ENCODE measurements at regions of chr1 and their contacts with region 1.

Region 1: GRCh38 chr1:186363891-186364290 is 11.2 kb downstream of the TPR start:
- H3K4me3 Mint-ChIP-seq: no peak overlapping the region
- H3K27ac Mint-ChIP-seq: no peak overlapping the region
- H3K4me1 Mint-ChIP-seq: no peaks in the 10 kb centered on the region
- H3K27me3 Mint-ChIP-seq: no peaks in the 10 kb centered on the region

Region 2: GRCh38 chr1:186231962-186232361 is 131.9 kb before region 1 on chr1:
- intact Hi-C with region 1: no loop called
- H3K4me3 Mint-ChIP-seq: no peak overlapping the region
- H3K27ac Mint-ChIP-seq: no peak overlapping the region
- H3K4me1 Mint-ChIP-seq: no peaks in the 10 kb centered on the region
- H3K27me3 Mint-ChIP-seq: no peaks in the 10 kb centered on the region

Region 3: DNA sequence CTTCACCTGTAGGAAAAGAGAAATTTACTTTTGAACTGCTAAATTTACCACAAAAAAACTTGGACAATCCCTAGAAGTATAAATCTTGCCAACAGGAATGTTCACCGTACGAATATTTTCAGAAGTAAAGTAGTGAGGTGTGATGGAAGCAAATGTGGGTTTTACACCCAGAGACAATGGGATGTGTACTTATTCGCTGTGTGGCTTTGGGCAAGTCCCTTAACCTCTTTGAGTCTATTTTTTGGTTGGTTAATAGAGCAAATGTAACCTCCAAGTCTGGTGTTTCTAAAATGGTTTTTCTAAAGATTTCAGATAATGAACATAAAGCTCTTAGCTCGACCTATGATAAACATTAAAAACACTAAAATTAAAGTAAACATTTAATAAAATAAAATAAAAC is 40.0 kb before region 1 on chr1:
- intact Hi-C with region 1: loop called (anchors 5 kb)
- H3K4me3 Mint-ChIP-seq: no peak overlapping the region
- H3K27ac Mint-ChIP-seq: no peak overlapping the region
- H3K4me1 Mint-ChIP-seq: no peaks in the 10 kb centered on the region
- H3K27me3 Mint-ChIP-seq: no peaks in the 10 kb centered on the region

Region 4: DNA sequence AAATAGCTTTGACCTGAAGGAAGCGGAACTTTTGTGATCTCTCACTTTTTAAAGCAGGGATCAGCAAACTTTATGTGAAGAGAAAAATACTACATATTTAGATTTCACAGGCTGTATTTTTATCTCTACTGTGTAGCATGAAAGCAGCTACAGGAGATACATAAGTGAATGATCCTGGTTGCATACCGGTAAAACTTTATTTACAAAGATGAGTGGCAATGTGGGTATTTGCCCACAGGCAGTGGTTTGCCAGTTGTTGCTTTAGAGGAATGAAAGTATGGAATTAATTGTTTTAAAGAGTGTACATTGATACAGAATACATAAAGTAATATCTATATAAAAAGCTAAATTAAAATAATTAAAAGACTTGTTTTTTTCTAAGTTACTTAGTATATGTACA is 29.6 kb after region 1 on chr1:
- intact Hi-C with region 1: loop called (anchors 5 kb)
- H3K4me3 Mint-ChIP-seq: no peak overlapping the region
- H3K27ac Mint-ChIP-seq: no peak overlapping the region
- H3K4me1 Mint-ChIP-seq: no peaks in the 10 kb centered on the region
- H3K27me3 Mint-ChIP-seq: no peaks in the 10 kb centered on the region

Region 5: DNA sequence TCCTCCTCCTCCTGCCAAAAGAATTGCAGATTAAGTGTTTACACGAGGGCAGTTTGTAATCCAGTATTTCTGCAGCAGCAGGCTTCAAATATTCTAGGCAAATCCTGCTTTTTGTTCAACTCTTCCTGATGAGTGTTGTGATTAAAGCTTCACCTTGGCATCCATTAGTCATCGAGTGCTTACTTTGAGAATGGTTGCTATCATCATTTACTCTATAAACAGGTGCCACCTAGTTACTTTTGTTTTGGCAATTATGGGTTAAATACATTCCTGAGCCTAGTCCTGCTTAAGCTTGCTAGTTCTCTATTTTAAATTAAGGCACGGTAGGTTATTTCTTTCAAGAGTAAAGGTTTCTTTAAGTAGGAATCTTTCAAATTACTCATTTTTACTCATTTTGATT is 76.7 kb after region 1 on chr1:
- intact Hi-C with region 1: no loop called
- H3K4me3 Mint-ChIP-seq: no peak overlapping the region
- H3K27ac Mint-ChIP-seq: no peak overlapping the region
- H3K4me1 Mint-ChIP-seq: peaks cover 39% of the 10 kb centered on the region
- H3K27me3 Mint-ChIP-seq: no peaks in the 10 kb centered on the region

Region 6: DNA sequence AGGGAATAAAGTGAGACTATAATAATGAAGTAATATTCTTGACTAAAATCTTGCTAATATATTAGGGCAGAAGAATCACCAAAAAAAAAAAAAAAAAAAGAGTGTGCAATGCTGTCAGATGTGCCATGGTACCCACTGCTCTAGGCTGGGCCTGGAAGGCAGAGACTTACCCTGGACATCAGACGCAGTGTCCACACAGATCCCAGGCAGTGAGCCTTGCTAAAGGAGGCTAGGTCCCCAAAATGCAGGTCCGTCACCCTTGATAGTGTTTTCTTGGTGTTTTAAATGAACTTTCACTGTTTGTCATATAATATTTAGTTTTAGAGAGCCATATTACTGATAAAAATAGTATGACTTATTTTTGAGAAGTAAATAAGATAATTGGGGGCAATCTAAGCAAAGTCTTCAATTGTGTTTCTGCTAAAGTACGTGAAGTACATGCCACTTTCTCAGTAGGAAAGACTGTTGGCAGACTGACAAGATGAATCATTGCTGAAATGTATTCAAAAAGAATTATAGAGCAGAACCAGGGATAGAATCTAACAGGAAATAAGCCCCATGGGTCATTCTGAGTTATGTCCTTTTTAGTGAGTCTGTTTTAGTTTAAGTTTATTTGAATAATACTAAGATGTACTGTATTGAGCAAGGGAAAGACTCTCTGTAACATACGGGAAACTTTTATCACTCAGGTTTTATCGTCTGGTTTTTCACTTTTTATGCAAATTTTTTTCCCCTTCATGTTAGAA is 171.7 kb after region 1 on chr1:
- intact Hi-C with region 1: no loop called
- H3K4me3 Mint-ChIP-seq: no peak overlapping the region
- H3K27ac Mint-ChIP-seq: no peak overlapping the region
- H3K4me1 Mint-ChIP-seq: peaks cover 20% of the 10 kb centered on the region
- H3K27me3 Mint-ChIP-seq: no peaks in the 10 kb centered on the region

Measured in dendritic cell treated with granulocyte-macrophage colony-stimulating factor and Interleukin-4, amounts not matched to agents 40 ng/mL and 50 ng/mL, for 4 days (primary cell).